CD14-positive monocyte (primary cell): ENCODE measurements at regions of chr7 and their contacts with region 1.

Region 1: DNA sequence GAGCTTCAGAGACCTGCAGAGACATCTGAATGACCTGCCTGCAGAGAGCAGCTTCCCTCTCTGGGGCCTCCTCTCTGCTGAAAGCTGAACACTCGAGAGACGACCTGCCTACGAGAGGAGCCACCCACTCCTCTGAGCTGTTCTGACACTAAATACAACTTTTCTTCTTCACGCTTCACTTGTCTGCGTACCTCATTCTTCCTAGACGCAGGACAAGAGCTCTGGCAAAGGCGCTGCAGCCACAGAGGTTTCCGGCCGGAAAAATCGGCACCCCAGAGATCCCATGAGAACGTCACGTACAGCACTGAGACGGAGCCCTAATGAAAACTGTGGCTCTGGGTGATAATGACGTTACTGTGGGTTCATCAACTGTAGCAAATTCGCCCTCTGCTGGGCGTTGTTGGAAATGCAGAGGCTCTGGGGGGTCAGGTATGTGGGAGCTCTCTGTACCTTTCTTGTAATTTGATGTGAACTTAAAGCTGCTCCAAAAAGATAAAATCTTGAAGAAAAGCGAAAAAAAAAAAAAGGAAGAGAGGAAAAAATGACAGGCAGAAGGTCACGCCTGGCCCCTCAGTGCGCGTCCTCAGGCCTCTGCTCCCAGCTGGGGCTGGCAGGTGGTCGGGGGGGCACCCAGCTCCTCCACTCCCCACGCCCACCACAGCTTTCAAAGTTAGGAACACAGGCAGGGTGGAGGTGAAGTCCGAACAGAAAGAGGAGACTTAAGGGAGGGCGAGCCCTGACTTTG is 120.7 kb downstream of the DYNC2I1 start:
- DNase-seq: peak; percentile 66 to 80 (median 71)
- H3K4me3 ChIP-seq: peak overlapping the region; percentile 51 to 78 (median 76)
- H3K4me3 Mint-ChIP-seq: peak overlapping the region; percentile 95 to 99
- H3K27ac ChIP-seq: peak overlapping the region; percentile 51 to 66
- H3K27ac Mint-ChIP-seq: peak overlapping the region; percentile 26 to 94 (median 88)
- H3K4me1 ChIP-seq: peaks cover 7 to 12% of the 10 kb centered on the region in 2 donors
- H3K4me1 Mint-ChIP-seq: peaks cover 8% of the 10 kb centered on the region
- H3K27me3 ChIP-seq: no peaks in the 10 kb centered on the region
- H3K27me3 Mint-ChIP-seq: peaks cover 1 to 4% (median 3%) of the 10 kb centered on the region in 3 donors
- CTCF ChIP-seq: peak; percentile 93

Region 2: DNA sequence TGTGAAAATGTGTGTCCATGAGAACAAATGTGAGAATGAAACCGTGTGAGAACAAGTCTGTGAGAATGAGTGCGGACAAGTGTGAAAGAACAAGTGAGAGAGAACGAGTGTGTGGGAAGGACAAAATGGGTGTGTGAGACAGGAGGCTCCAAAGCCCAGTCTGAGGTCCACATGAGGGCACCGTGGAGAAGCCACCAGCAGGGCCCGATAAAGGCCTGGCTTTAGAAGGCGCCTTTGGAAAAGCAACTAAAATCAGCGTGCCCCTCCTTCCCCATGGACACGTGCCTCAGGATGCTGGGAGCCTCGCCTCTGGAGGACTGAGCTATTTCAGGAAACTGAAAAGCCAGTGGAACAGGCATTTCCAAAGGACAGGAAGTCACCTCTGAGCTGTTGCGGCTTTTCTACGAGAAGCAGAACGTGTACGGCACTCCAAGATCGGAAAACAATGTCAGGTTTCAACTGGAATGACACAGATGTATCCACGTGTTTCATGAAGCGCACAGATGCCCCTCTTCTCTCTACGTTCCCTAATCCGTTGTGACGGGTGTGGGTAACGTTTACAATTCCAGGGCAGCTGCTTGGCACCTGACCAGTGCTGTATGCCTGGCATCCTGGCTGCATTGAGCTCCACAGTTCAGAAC is 194.1 kb before region 1 on chr7:
- intact Hi-C with region 1: loop called (anchors 5 kb)
- DNase-seq: peak; percentile 19 to 26 (median 22)
- H3K4me3 ChIP-seq: no peak overlapping the region
- H3K4me3 Mint-ChIP-seq: no peak overlapping the region
- H3K27ac ChIP-seq: peak overlapping the region in 1 of 2 donors; percentile 13
- H3K27ac Mint-ChIP-seq: no peak overlapping the region
- H3K4me1 ChIP-seq: no peaks in the 10 kb centered on the region
- H3K4me1 Mint-ChIP-seq: no peaks in the 10 kb centered on the region
- H3K27me3 ChIP-seq: no peaks in the 10 kb centered on the region
- H3K27me3 Mint-ChIP-seq: no peaks in the 10 kb centered on the region
- CTCF ChIP-seq: peak; percentile 51

Region 3: GRCh38 chr7:158863611-158864506 is 113.2 kb before region 1 on chr7:
- intact Hi-C with region 1: loop called in 1 of 2 experiments (anchors 10 kb)
- DNase-seq: peak; percentile 18 to 54 (median 26)
- H3K4me3 ChIP-seq: peak overlapping the region; percentile 34 to 80 (median 79)
- H3K4me3 Mint-ChIP-seq: peak overlapping the region; percentile 87 to 94
- H3K27ac ChIP-seq: peak overlapping the region in 1 of 2 donors; percentile 69
- H3K27ac Mint-ChIP-seq: peak overlapping the region; percentile 68 to 94 (median 86)
- H3K4me1 ChIP-seq: peaks cover 4 to 7% of the 10 kb centered on the region in 2 donors
- H3K4me1 Mint-ChIP-seq: peaks cover 12% of the 10 kb centered on the region
- H3K27me3 ChIP-seq: no peaks in the 10 kb centered on the region
- H3K27me3 Mint-ChIP-seq: peaks cover 2 to 14% (median 6%) of the 10 kb centered on the region in 3 donors
- CTCF ChIP-seq: no peak